HCT116 (cell line): ENCODE measurements at regions of chr12 and their contacts with region 1.

Region 1: DNA sequence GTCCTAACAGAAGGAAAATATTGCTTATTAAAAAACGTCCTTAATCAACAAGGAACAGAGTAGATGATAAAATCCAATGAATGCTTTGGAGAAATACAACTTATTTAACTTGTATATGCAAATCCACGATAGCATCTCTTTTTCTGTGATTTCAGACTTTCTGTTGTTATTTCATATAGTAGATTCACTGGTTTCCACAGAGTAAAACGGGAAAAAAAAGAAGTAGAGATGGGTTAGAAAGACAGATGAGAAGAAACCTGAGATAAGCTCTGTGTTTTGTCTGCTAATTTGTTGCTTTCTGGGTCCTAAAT is 447.7 kb downstream of the RERGL start:
- DNase-seq: no peak
- ATAC-seq: no peak
- H3K4me3 ChIP-seq: no peak overlapping the region
- H3K27ac ChIP-seq: no peak overlapping the region
- H3K4me1 ChIP-seq: no peaks in the 10 kb centered on the region
- H3K27me3 ChIP-seq: no peaks in the 10 kb centered on the region
- CTCF ChIP-seq: no peak
- POLR2A ChIP-seq: no peak
- RAD21 ChIP-seq: no peak

Region 2: GRCh38 chr12:16165506-16165905 is 1476.8 kb before region 1 on chr12:
- CTCF ChIA-PET with region 1: interaction called, 3 read pairs
- POLR2A ChIA-PET with region 1: no interaction called
- RAD21 ChIA-PET with region 1: no interaction called
- intact Hi-C with region 1: loop called (anchors 10 kb)
- DNase-seq: peak; percentile 27
- ATAC-seq: peak; percentile 82
- H3K4me3 ChIP-seq: no peak overlapping the region
- H3K27ac ChIP-seq: no peak overlapping the region
- H3K4me1 ChIP-seq: no peaks in the 10 kb centered on the region
- H3K27me3 ChIP-seq: no peaks in the 10 kb centered on the region
- CTCF ChIP-seq: peak; percentile 55 to 68 (median 59); a peak in 5 of 6 replicates
- POLR2A ChIP-seq: no peak
- RAD21 ChIP-seq: peak; percentile 85

Region 3: GRCh38 chr12:16385782-16386646 is 1256.3 kb before region 1 on chr12:
- CTCF ChIA-PET with region 1: interaction called, 6 read pairs
- POLR2A ChIA-PET with region 1: no interaction called
- RAD21 ChIA-PET with region 1: no interaction called
- intact Hi-C with region 1: loop called (anchors 5 kb)
- DNase-seq: no peak
- ATAC-seq: peak; percentile 64
- H3K4me3 ChIP-seq: no peak overlapping the region
- H3K27ac ChIP-seq: no peak overlapping the region
- H3K4me1 ChIP-seq: peaks cover 0 to 5% of the 10 kb centered on the region in 2 experiments; a peak in 2 of 4 replicates
- H3K27me3 ChIP-seq: no peaks in the 10 kb centered on the region
- CTCF ChIP-seq: peak; percentile 24 to 46 (median 30); a peak in 4 of 6 replicates
- POLR2A ChIP-seq: no peak
- RAD21 ChIP-seq: peak; percentile 60

Region 4: GRCh38 chr12:16939871-16940306 is 702.4 kb before region 1 on chr12:
- CTCF ChIA-PET with region 1: no interaction called
- POLR2A ChIA-PET with region 1: no interaction called
- RAD21 ChIA-PET with region 1: no interaction called
- intact Hi-C with region 1: loop called (anchors 5 kb)
- DNase-seq: peak; percentile 78
- ATAC-seq: peak; percentile 96
- H3K4me3 ChIP-seq: no peak overlapping the region
- H3K27ac ChIP-seq: no peak overlapping the region
- H3K4me1 ChIP-seq: peaks cover 0 to 4% of the 10 kb centered on the region in 2 experiments; a peak in 1 of 4 replicates
- H3K27me3 ChIP-seq: no peaks in the 10 kb centered on the region
- CTCF ChIP-seq: peak; percentile 90 to 97 (median 92)
- POLR2A ChIP-seq: no peak
- RAD21 ChIP-seq: peak; percentile 79